ENCODE measurements at regions of chr1 and their contacts with region 1.

Region 1: DNA sequence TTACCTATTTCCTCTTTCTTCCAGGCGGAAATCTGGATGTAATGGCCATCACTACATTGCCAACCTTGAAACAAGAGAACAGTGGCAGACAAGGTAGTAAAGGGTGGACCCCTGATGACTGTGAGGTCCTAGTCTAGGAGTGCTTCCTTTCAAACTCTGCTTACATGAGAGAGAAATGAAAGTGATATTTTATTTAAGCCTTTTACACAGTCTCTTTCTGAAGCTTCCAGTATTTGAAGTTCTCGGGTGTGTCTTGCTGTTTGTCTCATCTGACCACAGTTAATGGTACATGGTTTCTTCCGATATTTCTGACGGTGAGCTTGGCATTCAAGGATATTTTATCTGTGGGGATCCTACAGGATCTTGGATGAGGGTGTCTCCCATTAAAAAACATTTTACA is 215.2 kb downstream of the SLC45A1 start:
- DNase-seq: no peak
- H3K4me3 ChIP-seq: no peak overlapping the region
- H3K27ac ChIP-seq: no peak overlapping the region
- H3K4me1 ChIP-seq: peaks cover 0 to 13% (median 11%) of the 10 kb centered on the region in 4 donors
- H3K27me3 ChIP-seq: no peaks in the 10 kb centered on the region
- CTCF ChIP-seq: no peak
- EP300 ChIP-seq: no peak
- POLR2A ChIP-seq: no peak

Region 2: GRCh38 chr1:8482979-8483391 is 50.1 kb before region 1 on chr1:
- intact Hi-C with region 1: loop called (anchors 5 kb)
- DNase-seq: no peak
- H3K4me3 ChIP-seq: no peak overlapping the region
- H3K27ac ChIP-seq: peak overlapping the region in 2 of 4 donors; percentile 6 to 26
- H3K4me1 ChIP-seq: peaks cover 0 to 27% (median 14%) of the 10 kb centered on the region in 4 donors
- H3K27me3 ChIP-seq: no peaks in the 10 kb centered on the region
- CTCF ChIP-seq: no peak
- EP300 ChIP-seq: no peak
- POLR2A ChIP-seq: no peak

Region 3: GRCh38 chr1:8590526-8591351 is 57.6 kb after region 1 on chr1:
- intact Hi-C with region 1: no loop called
- DNase-seq: no peak
- H3K4me3 ChIP-seq: no peak overlapping the region
- H3K27ac ChIP-seq: peak overlapping the region in 3 of 4 donors; percentile 2 to 63 (median 19)
- H3K4me1 ChIP-seq: peaks cover 0 to 30% (median 20%) of the 10 kb centered on the region in 4 donors
- H3K27me3 ChIP-seq: no peaks in the 10 kb centered on the region
- CTCF ChIP-seq: no peak
- EP300 ChIP-seq: no peak
- POLR2A ChIP-seq: no peak

Region 4: DNA sequence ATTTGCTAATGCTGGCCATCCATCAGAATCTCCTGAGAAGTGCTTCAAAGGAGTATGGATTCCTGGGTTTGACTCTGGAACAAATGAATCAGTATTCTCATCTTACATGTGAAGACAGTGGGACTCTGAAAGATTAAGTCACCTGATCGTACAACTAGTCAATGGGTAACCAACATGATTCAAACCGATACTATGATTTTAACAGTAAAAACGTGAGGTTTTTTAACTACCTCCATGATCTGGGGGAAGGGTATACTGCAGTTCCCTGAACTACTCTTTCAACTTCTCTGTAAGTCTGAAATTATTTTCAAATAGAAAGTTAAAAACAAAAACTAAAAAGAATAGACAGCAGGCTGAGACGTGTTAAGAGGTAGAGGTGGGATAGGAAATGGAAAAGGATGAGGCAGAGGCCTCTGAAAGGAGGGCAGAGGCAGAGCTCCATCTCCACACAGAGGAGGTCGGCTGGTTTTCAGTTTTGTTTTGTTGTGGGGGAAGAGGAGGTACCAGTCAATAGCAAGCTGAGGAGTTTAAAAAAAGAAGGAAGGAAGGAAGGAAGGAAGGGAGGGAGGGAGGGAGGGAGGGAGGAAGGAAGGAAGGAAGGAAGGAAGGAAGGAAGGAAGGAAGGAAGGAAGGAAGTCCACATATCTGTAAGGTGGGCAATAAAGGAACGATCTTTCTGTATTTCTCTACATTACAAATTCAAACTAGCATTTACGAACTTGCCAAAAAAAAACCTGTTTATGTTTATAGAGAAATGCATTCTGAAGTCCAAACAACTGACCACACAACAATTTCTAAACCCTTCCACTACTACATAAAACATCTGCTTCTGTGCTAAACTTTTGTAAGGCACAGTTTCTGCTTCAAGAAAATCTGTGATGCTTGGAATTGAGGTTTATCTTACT is 71.2 kb after region 1 on chr1:
- intact Hi-C with region 1: no loop called
- DNase-seq: no peak
- H3K4me3 ChIP-seq: no peak overlapping the region
- H3K27ac ChIP-seq: no peak overlapping the region
- H3K4me1 ChIP-seq: peaks cover 0 to 12% (median 7%) of the 10 kb centered on the region in 4 donors
- H3K27me3 ChIP-seq: no peaks in the 10 kb centered on the region
- CTCF ChIP-seq: no peak
- EP300 ChIP-seq: no peak
- POLR2A ChIP-seq: no peak

Measured in sigmoid colon (tissue), 7 donors.